HEK293 (cell line): ENCODE measurements at regions of chr11 and their contacts with region 1.

Region 1: GRCh38 chr11:20127671-20128527 is 32.4 kb downstream of the DBX1 start:
- H3K4me3 ChIP-seq: no peak overlapping the region
- H3K27ac ChIP-seq: no peak overlapping the region
- H3K4me1 ChIP-seq: no peaks in the 10 kb centered on the region
- CTCF ChIP-seq: peak; percentile 69

Region 2: DNA sequence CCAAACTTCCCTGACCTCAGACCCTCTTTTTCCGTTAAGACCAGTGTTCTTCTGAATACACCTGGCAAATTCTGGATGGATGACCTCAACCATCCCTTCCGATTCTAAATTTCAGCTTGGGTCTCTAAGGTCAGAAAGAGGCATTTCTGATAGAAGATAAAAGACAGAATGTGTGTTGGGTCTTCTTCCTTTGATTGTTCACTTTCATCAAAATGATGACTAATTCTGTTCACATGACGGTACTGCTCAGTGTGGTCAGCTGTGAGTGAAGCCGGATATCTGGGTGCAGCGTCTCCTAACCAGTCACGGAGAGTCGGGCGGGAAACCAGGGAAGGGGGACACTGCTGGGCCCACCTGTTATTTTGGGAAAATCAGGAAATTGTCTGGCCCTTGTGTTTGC is 566.9 kb before region 1 on chr11:
- CTCF ChIA-PET with region 1: interaction called, 10 read pairs
- POLR2A ChIA-PET with region 1: no interaction called
- H3K4me3 ChIP-seq: no peak overlapping the region
- H3K27ac ChIP-seq: no peak overlapping the region
- H3K4me1 ChIP-seq: no peaks in the 10 kb centered on the region
- CTCF ChIP-seq: no peak

Region 3: GRCh38 chr11:19922689-19923035 is 205.2 kb before region 1 on chr11:
- CTCF ChIA-PET with region 1: interaction called, 15 read pairs
- POLR2A ChIA-PET with region 1: no interaction called
- H3K4me3 ChIP-seq: no peak overlapping the region
- H3K27ac ChIP-seq: no peak overlapping the region
- H3K4me1 ChIP-seq: no peaks in the 10 kb centered on the region
- CTCF ChIP-seq: no peak

Region 4: DNA sequence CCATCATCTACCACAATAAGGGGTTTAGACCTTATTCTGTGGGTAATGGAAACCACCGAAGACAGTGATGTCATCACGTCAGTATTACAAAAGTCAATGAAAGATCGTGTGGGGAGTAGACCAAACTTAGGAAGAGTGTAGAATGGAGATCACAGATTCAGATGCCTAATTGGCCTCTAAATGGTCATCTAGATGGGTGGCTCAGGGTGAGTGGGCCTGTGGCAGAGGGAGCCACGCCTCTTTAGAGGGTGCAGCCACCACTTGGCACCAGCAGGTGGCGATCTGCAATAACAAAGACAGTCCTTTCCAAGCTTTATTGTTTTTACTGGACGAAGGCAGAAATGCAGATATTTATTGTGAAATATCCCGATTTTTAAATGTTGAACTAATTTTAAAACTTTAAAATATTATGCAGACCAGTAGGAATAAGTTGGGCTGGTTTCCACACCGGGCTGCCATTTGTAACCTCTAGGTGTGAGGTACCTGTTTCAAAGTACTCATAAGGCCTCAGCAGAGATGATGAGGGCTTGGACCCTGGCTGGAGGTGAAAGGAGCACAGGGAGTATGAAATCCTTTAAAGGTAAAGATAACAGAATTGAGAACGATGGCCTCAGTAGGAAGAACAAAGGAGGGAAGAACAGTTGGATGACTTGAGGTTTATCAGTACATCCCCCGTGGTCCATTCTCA is 189.6 kb before region 1 on chr11:
- CTCF ChIA-PET with region 1: interaction called, 19 read pairs
- POLR2A ChIA-PET with region 1: no interaction called
- H3K4me3 ChIP-seq: no peak overlapping the region
- H3K27ac ChIP-seq: no peak overlapping the region
- H3K4me1 ChIP-seq: no peaks in the 10 kb centered on the region
- CTCF ChIP-seq: no peak

Region 5: GRCh38 chr11:20080032-20080685 is 47.7 kb before region 1 on chr11:
- CTCF ChIA-PET with region 1: no interaction called
- POLR2A ChIA-PET with region 1: no interaction called
- H3K4me3 ChIP-seq: no peak overlapping the region
- H3K27ac ChIP-seq: no peak overlapping the region
- H3K4me1 ChIP-seq: no peaks in the 10 kb centered on the region
- CTCF ChIP-seq: no peak

Region 6: GRCh38 chr11:20110908-20111669 is 16.8 kb before region 1 on chr11:
- CTCF ChIA-PET with region 1: interaction called, 70 read pairs
- POLR2A ChIA-PET with region 1: no interaction called
- H3K4me3 ChIP-seq: no peak overlapping the region
- H3K27ac ChIP-seq: no peak overlapping the region
- H3K4me1 ChIP-seq: peaks cover 3% of the 10 kb centered on the region; the same call in 1 of the 2 replicates
- CTCF ChIP-seq: peak; percentile 75

Region 7: DNA sequence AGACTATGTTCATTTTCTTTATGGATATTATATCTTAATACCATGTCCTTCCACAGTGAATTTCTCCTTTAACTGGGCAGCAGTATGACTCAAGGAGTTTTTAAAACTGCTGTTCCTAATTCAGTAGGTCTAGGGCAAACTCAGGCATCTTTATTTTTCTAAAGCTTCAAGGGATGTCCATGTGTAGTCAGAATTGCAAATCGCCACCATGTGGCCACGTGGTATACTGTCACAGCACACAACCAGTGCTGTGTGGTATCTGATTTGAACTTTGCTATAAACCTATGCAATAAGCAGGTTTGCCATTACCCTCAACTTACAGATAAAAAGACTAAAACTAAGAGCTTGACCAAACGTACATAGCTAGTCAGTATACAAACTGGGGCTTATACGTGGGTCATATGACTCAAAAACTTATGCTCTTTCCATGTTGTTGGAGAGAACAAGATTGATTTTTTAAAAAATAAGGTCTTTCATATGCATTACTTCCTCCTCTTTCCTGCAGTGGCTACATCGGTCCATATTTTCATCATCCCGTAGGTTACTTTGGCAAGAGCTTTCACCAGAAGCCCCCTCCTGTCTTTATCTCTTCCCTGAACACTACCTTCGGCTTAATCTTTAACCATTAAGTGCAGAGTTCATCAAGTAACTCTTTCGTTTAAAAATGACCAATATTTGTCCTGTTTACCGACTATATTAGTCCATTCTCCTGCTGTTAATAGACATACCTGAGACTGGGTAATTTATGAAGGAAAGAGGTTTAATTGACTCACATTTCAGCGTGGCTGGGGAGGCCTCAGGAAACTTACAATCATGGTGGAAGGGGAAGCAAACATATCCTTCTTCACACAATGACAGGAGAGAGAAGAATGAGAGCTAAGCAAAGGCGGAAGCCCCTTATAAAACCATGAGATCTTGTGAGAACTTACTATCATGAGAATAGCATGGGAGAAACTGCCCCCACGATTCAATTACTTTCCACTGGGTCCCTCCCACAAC is 227.6 kb after region 1 on chr11:
- CTCF ChIA-PET with region 1: interaction called, 107 read pairs
- POLR2A ChIA-PET with region 1: no interaction called
- H3K4me3 ChIP-seq: no peak overlapping the region
- H3K27ac ChIP-seq: no peak overlapping the region
- H3K4me1 ChIP-seq: no peaks in the 10 kb centered on the region
- CTCF ChIP-seq: no peak